GM10248 (cell line): ENCODE measurements at regions of chr2 and their contacts with region 1.

Region 1: GRCh38 chr2:103144837-103145236 is 383.0 kb downstream of the TMEM182 start:
- DNase-seq: no peak
- CTCF ChIP-seq: no peak

Region 2: DNA sequence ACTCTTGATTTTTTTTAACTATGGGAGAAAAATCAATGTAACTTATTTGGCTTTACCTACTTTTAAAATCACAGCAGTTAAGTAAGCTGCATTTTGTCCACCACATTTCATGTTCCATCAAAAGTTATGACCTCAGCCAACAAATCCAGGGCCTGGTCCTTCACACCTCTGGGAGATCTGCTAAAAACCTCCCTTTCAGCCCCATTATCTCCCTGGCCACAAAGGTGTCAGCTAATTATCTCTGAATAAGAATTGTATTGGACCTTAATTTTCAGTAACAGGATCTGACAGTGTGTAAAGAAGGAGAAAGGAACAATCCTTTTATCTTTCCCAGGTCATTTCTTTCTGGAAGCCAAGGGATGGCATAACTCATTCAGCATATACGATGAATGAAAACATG is 23.7 kb before region 1 on chr2:
- CTCF ChIA-PET with region 1: no interaction called
- POLR2A ChIA-PET with region 1: no interaction called
- DNase-seq: no peak
- CTCF ChIP-seq: no peak

Region 3: DNA sequence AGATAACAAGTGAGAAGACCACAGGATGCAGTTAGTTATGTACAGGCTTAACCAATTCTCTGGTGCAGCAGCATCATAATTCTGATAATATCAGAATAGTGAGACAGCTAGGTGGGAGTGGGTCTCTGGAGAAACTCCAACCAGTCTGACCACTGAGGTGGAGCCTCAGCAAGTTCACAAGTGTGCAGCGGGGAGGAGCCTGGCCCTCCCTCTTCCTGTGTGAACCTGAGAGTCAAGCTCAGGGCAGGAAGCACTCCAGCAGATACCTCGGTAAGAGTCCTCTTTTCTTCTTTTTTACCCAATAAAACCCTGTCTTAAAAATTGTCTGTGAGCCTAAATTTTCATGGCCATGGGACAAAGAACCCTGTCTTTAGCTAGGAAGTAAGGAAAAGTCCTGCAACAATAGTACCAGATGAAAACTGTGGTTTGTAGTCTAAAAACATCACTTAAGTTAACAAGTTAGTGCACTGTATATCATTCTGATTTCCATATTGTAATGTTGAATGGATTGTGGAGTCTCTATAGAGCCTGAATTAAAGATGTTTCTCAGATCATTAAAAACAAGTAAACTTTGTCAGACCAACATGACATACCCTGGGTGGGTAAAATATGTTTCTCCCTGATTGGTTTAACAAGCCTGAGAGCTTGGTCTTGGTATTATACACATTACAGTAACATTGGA is 12.2 kb before region 1 on chr2:
- CTCF ChIA-PET with region 1: no interaction called
- POLR2A ChIA-PET with region 1: no interaction called
- DNase-seq: no peak
- CTCF ChIP-seq: no peak

Region 4: GRCh38 chr2:103161456-103162289 is 16.8 kb after region 1 on chr2:
- CTCF ChIA-PET with region 1: interaction called, 27 read pairs
- POLR2A ChIA-PET with region 1: no interaction called
- DNase-seq: peak; percentile 40
- CTCF ChIP-seq: peak; percentile 76